CD14-positive monocyte (primary cell): ENCODE measurements at regions of chr1 and their contacts with region 1.

Region 1: DNA sequence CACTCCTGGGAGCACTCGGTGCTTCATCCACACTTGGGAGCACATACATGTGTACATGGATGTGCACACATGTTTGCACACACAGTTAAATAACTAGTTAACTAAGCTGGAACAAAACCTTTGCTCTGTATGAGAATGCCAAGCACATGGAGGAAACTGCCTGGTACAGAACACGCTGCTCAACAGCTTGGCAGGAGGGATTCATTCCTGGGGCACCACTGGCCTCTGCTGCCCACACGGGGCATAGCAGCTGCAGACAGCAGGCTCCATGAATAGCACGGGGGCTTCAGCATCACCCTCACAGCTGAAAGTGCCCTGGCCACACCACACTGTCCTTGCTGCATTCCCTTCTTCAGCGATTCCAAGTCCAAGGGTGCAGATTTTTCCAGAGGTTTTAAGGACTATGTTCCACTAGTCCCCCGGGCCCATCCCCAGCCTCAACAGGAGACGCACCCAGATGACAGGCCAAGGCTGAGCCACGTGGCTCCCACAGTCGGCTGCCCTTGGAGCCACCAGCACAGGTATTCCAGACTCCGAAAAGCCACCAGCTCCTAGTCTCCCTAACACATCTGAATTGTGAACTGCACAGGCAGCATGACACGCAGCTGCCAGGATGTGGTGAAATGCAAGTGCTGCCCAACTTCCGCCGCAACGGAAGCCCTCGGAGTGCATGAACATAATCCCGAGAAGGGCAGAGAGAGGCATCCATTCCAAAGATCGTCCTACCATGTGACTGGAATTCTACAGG is 16.9 kb downstream of the NPHP4 start:
- DNase-seq: peak in 2 of 3 donors; percentile 39 to 44
- H3K4me3 ChIP-seq: peak overlapping the region in 1 of 3 experiments; percentile 3
- H3K4me3 Mint-ChIP-seq: peak overlapping the region; percentile 41 to 75
- H3K27ac ChIP-seq: no peak overlapping the region
- H3K27ac Mint-ChIP-seq: peak overlapping the region in 4 of 7 donors; percentile 9 to 66 (median 18)
- H3K4me1 ChIP-seq: peaks cover 18 to 19% of the 10 kb centered on the region in 2 donors
- H3K4me1 Mint-ChIP-seq: peaks cover 23% of the 10 kb centered on the region
- H3K27me3 ChIP-seq: no peaks in the 10 kb centered on the region
- H3K27me3 Mint-ChIP-seq: peaks cover 0 to 2% (median 2%) of the 10 kb centered on the region in 3 donors
- CTCF ChIP-seq: peak; percentile 77

Region 2: DNA sequence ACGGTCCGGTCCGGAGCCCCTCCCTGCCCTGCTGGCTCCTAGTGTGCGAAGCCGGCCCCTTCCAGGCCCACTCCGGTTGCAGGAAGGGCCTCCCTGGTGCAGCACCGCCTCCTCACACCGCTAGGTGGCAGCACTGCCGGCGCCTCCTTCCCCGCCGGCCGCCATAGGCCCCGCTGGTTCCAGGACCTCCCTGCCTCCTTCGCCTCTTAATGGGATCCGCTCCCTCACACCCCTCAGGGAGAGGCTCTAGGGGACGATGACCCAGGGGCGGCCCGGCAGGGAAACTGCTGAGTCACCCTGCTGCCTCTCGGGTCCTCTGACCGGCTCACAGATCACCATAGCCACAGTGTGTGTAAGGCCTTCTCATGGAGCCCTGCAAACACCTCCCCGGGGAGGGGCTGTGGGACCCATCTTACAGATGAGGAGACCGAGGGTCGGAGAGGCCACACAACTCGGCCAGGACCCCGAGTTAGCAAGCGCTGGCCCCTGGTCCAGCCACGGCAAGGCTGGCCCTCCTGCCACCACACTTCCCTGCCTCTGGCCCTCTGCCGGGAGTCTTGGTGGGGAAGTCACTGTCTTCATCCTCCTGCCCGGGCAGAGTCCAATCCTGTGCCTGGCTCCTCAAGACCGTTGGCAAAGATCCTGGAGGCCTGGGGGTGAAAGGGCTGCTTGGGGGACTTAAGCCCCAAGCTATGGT is 1322.5 kb before region 1 on chr1:
- intact Hi-C with region 1: loop called in 1 of 2 experiments (anchors 5 kb)
- DNase-seq: peak in 2 of 3 donors; percentile 4 to 29
- H3K4me3 ChIP-seq: no peak overlapping the region
- H3K4me3 Mint-ChIP-seq: peak overlapping the region in 1 of 2 donors; percentile 74
- H3K27ac ChIP-seq: no peak overlapping the region
- H3K27ac Mint-ChIP-seq: no peak overlapping the region
- H3K4me1 ChIP-seq: no peaks in the 10 kb centered on the region
- H3K4me1 Mint-ChIP-seq: no peaks in the 10 kb centered on the region
- H3K27me3 ChIP-seq: peaks cover 22 to 56% of the 10 kb centered on the region in 2 donors
- H3K27me3 Mint-ChIP-seq: peaks cover 36 to 50% (median 38%) of the 10 kb centered on the region in 3 donors
- CTCF ChIP-seq: peak; percentile 100

Region 3: DNA sequence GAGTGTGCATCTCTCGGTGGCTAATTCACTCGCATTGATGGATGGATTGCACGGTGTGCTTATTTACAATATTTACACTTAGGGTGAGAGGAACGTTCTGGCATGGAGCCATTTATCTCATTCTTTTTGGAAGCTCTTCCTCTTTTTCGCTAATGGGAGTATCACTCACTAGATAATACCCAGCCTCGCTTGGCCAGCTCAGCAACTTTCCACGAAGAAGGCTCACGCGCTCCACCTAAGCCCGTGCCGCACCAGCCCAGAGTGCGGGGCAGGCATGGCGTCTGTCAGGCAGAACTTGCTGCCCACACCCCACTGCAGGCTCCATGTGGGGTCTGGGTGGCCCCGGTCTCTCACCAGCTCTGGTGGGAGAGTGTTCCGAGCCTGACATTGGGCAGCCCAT is 468.0 kb before region 1 on chr1:
- intact Hi-C with region 1: loop called in 1 of 2 experiments (anchors 2 kb)
- DNase-seq: no peak
- H3K4me3 ChIP-seq: no peak overlapping the region
- H3K4me3 Mint-ChIP-seq: no peak overlapping the region
- H3K27ac ChIP-seq: no peak overlapping the region
- H3K27ac Mint-ChIP-seq: no peak overlapping the region
- H3K4me1 ChIP-seq: no peaks in the 10 kb centered on the region
- H3K4me1 Mint-ChIP-seq: no peaks in the 10 kb centered on the region
- H3K27me3 ChIP-seq: no peaks in the 10 kb centered on the region
- H3K27me3 Mint-ChIP-seq: peaks cover 4 to 10% (median 7%) of the 10 kb centered on the region in 3 donors
- CTCF ChIP-seq: no peak

Region 4: GRCh38 chr1:6026095-6026809 is 50.9 kb after region 1 on chr1:
- intact Hi-C with region 1: no loop called
- DNase-seq: peak; percentile 94 to 99 (median 98)
- H3K4me3 ChIP-seq: peak overlapping the region; percentile 51 to 80 (median 53)
- H3K4me3 Mint-ChIP-seq: peak overlapping the region; percentile 87 to 94
- H3K27ac ChIP-seq: peak overlapping the region; percentile 95 to 100
- H3K27ac Mint-ChIP-seq: peak overlapping the region; percentile 97 to 100 (median 99)
- H3K4me1 ChIP-seq: peaks cover 55 to 62% of the 10 kb centered on the region in 2 donors
- H3K4me1 Mint-ChIP-seq: peaks cover 55% of the 10 kb centered on the region
- H3K27me3 ChIP-seq: no peaks in the 10 kb centered on the region
- H3K27me3 Mint-ChIP-seq: peaks cover 0 to 4% (median 0%) of the 10 kb centered on the region in 3 donors
- CTCF ChIP-seq: no peak

Region 5: DNA sequence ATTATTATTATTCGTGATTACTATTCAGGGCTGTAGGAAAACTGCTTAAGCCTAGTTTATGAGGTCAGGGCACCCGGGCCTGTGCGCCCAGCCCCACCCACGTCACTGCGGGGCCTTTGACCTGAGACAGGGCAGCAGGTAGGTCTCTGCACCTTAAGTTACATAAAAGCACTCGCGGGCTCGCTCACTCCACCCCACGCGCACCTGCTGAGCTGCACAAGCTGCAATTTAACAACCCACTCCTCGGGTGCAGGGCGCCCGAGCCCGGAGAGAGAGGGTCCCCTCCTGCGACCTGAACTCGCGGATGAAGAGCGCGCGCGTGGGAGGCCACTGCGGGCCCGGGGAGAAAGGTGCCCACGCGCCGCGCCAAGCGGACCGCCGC is 260.0 kb after region 1 on chr1:
- intact Hi-C with region 1: no loop called
- DNase-seq: no peak
- H3K4me3 ChIP-seq: peak overlapping the region; percentile 57 to 81 (median 64)
- H3K4me3 Mint-ChIP-seq: peak overlapping the region; percentile 85 to 92
- H3K27ac ChIP-seq: no peak overlapping the region
- H3K27ac Mint-ChIP-seq: peak overlapping the region in 1 of 7 donors; percentile 40
- H3K4me1 ChIP-seq: peaks cover 13% of the 10 kb centered on the region in 2 donors
- H3K4me1 Mint-ChIP-seq: peaks cover 12% of the 10 kb centered on the region
- H3K27me3 ChIP-seq: peaks cover 12 to 19% of the 10 kb centered on the region in 2 donors
- H3K27me3 Mint-ChIP-seq: peaks cover 27 to 31% (median 29%) of the 10 kb centered on the region in 3 donors
- CTCF ChIP-seq: no peak

Region 6: GRCh38 chr1:6438047-6438525 is 462.8 kb after region 1 on chr1:
- intact Hi-C with region 1: no loop called
- DNase-seq: peak; percentile 22 to 49 (median 49)
- H3K4me3 ChIP-seq: no peak overlapping the region
- H3K4me3 Mint-ChIP-seq: no peak overlapping the region
- H3K27ac ChIP-seq: no peak overlapping the region
- H3K27ac Mint-ChIP-seq: no peak overlapping the region
- H3K4me1 ChIP-seq: peaks cover 0 to 4% of the 10 kb centered on the region in 2 donors
- H3K4me1 Mint-ChIP-seq: peaks cover 5% of the 10 kb centered on the region
- H3K27me3 ChIP-seq: peaks cover 7 to 26% of the 10 kb centered on the region in 2 donors
- H3K27me3 Mint-ChIP-seq: peaks cover 24 to 58% (median 35%) of the 10 kb centered on the region in 3 donors
- CTCF ChIP-seq: peak; percentile 98